ENCODE measurements at regions of chr17 and their contacts with region 1.

Region 1: GRCh38 chr17:37643118-37643766 is at the start of gene DDX52:
- DNase-seq: peak; percentile 78 to 98 (median 87)

Region 2: GRCh38 chr17:37527249-37527851 is 115.9 kb before region 1 on chr17:
- intact Hi-C with region 1: no loop called
- DNase-seq: no peak

Region 3: GRCh38 chr17:37570527-37571093 is 72.6 kb before region 1 on chr17:
- intact Hi-C with region 1: no loop called
- DNase-seq: peak in 7 of 10 donors; percentile 17 to 85 (median 43)

Region 4: GRCh38 chr17:37818689-37819088 is 175.4 kb after region 1 on chr17:
- intact Hi-C with region 1: loop called (anchors 10 kb)
- DNase-seq: no peak

Measured in posterior cingulate gyrus (tissue), 11 donors.